Natural killer cell (primary cell): ENCODE measurements at regions of chr2 and their contacts with region 1.

Region 1: DNA sequence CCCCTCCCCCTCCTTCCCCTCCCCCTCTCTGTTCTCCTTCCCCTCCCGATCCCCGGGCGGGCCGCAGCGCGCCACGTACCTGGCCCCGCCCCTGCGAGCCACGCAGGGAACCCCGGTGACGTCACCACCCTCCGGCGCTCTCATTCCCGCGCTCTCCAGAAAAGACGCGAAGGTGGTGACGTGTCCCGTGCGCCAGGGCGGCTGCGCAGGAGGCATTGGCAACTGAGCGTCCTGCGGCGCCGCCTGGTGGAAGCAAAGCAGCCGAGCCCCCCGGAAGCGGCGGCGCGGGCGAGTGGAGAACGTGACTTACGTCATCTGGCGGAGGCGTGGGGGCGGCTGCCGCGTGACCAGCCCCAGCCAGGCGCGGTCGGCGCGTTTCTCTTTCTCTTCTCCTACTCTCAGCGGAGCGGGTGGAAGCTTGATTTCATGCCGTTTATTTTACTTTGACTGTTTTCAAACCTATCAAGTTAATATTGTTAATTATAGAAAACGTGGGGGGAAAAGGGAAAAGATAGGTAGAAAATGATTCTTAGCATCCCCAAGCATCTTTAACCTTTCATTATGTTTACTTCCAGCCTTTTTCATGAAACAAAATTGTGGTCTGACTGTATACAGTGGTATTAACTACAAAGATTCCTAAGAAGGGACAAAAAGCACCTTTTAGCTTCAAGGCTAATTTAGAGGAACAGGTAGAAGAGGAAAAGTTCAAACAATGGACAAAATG is 48.1 kb downstream of the C2orf42 start:
- DNase-seq: peak; percentile 100
- ATAC-seq: peak; percentile 60 to 86 (median 69)
- H3K4me3 ChIP-seq: peak overlapping the region; percentile 65
- H3K4me3 Mint-ChIP-seq: peak overlapping the region; percentile 94
- H3K27ac ChIP-seq: peak overlapping the region; percentile 98
- H3K27ac Mint-ChIP-seq: peak overlapping the region; percentile 98 to 100
- H3K4me1 ChIP-seq: peaks cover 46% of the 10 kb centered on the region
- H3K4me1 Mint-ChIP-seq: peaks cover 40 to 46% of the 10 kb centered on the region in 2 donors
- H3K27me3 ChIP-seq: no peaks in the 10 kb centered on the region
- H3K27me3 Mint-ChIP-seq: no peaks in the 10 kb centered on the region
- CTCF ChIP-seq: peak; percentile 85

Region 2: GRCh38 chr2:69829256-69830046 is 313.3 kb before region 1 on chr2 and contains the start of gene GMCL1:
- intact Hi-C with region 1: loop called (anchors 5 kb)
- DNase-seq: peak; percentile 99 to 100
- ATAC-seq: peak; percentile 92 to 98 (median 92)
- H3K4me3 ChIP-seq: peak within 1 kb of the TSS; percentile 73
- H3K4me3 Mint-ChIP-seq: peak within 1 kb of the TSS; percentile 99
- H3K27ac ChIP-seq: peak within 1 kb of the TSS; percentile 84
- H3K27ac Mint-ChIP-seq: peak within 1 kb of the TSS; percentile 81 to 99
- H3K4me1 ChIP-seq: peaks cover 27% of the 10 kb centered on the region
- H3K4me1 Mint-ChIP-seq: peaks cover 40 to 48% of the 10 kb centered on the region in 2 donors
- H3K27me3 ChIP-seq: no peaks in the 10 kb centered on the region
- H3K27me3 Mint-ChIP-seq: no peaks in the 10 kb centered on the region
- CTCF ChIP-seq: no peak
- total RNA-seq, gene GMCL1: 34.6 to 49.4 (median 35.9) TPM

Region 3: GRCh38 chr2:69946351-69947077 is 196.2 kb before region 1 on chr2:
- intact Hi-C with region 1: loop called (anchors 10 kb)
- DNase-seq: peak; percentile 52 to 75
- ATAC-seq: peak; percentile 87
- H3K4me3 ChIP-seq: no peak overlapping the region
- H3K4me3 Mint-ChIP-seq: peak overlapping the region; percentile 82
- H3K27ac ChIP-seq: peak overlapping the region; percentile 49
- H3K27ac Mint-ChIP-seq: peak overlapping the region; percentile 78 to 91
- H3K4me1 ChIP-seq: peaks cover 36% of the 10 kb centered on the region
- H3K4me1 Mint-ChIP-seq: peaks cover 34 to 42% of the 10 kb centered on the region in 2 donors
- H3K27me3 ChIP-seq: no peaks in the 10 kb centered on the region
- H3K27me3 Mint-ChIP-seq: no peaks in the 10 kb centered on the region
- CTCF ChIP-seq: no peak

Region 4: DNA sequence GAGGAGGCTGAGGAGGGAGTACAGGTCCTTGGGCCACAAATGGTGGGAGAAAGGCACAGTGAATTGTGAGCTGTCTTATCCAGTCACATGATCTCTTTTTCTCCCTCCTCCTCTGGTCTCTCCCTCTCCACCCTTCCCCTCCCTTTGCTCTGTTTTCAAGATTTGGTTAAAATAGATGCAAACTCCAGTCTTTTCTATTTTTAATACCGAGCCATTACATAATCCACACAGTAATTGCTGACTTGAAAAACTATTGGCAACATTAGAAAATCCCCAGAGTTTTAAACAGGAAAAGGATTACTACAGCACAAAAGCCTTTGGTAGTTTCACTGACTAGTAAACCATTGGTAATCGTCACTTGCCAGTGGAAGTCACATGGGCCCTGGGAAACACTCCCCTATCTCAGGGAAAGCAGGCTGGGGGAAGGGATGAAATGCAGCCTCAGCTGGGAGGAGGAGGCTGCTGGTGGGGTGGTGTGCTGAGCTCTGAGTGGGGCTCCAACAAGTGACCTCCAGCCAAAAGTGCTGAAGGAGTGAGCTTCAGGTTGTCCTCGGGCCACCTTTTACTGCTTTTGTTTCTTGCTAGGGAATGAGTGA is 112.8 kb before region 1 on chr2:
- intact Hi-C with region 1: no loop called
- DNase-seq: no peak
- ATAC-seq: no peak
- H3K4me3 ChIP-seq: no peak overlapping the region
- H3K4me3 Mint-ChIP-seq: no peak overlapping the region
- H3K27ac ChIP-seq: peak overlapping the region; percentile 20
- H3K27ac Mint-ChIP-seq: no peak overlapping the region
- H3K4me1 ChIP-seq: peaks cover 17% of the 10 kb centered on the region
- H3K4me1 Mint-ChIP-seq: peaks cover 27 to 31% of the 10 kb centered on the region in 2 donors
- H3K27me3 ChIP-seq: no peaks in the 10 kb centered on the region
- H3K27me3 Mint-ChIP-seq: no peaks in the 10 kb centered on the region
- CTCF ChIP-seq: no peak

Region 5: GRCh38 chr2:70086838-70087701 is 55.7 kb before region 1 on chr2 and contains the start of gene PCBP1:
- intact Hi-C with region 1: loop called (anchors 1 kb)
- DNase-seq: peak; percentile 98
- ATAC-seq: peak; percentile 62 to 85 (median 71)
- H3K4me3 ChIP-seq: peak within 1 kb of the TSS; percentile 94
- H3K4me3 Mint-ChIP-seq: peak within 1 kb of the TSS; percentile 98
- H3K27ac ChIP-seq: peak within 1 kb of the TSS; percentile 98
- H3K27ac Mint-ChIP-seq: peak within 1 kb of the TSS; percentile 99 to 100
- H3K4me1 ChIP-seq: peaks cover 63% of the 10 kb centered on the region
- H3K4me1 Mint-ChIP-seq: peaks cover 79 to 81% of the 10 kb centered on the region in 2 donors
- H3K27me3 ChIP-seq: no peaks in the 10 kb centered on the region
- H3K27me3 Mint-ChIP-seq: no peaks in the 10 kb centered on the region
- CTCF ChIP-seq: no peak
- total RNA-seq, gene PCBP1: 329 to 358 (median 352) TPM

Region 6: GRCh38 chr2:70104231-70105111 is 38.3 kb before region 1 on chr2:
- intact Hi-C with region 1: loop called (anchors 1 kb)
- DNase-seq: peak in 1 of 2 donors; percentile 56
- ATAC-seq: no peak
- H3K4me3 ChIP-seq: peak overlapping the region; percentile 4
- H3K4me3 Mint-ChIP-seq: peak overlapping the region; percentile 86
- H3K27ac ChIP-seq: peak overlapping the region; percentile 84
- H3K27ac Mint-ChIP-seq: peak overlapping the region; percentile 91 to 97
- H3K4me1 ChIP-seq: peaks cover 53% of the 10 kb centered on the region
- H3K4me1 Mint-ChIP-seq: peaks cover 41 to 48% of the 10 kb centered on the region in 2 donors
- H3K27me3 ChIP-seq: no peaks in the 10 kb centered on the region
- H3K27me3 Mint-ChIP-seq: no peaks in the 10 kb centered on the region
- CTCF ChIP-seq: no peak

Region 7: GRCh38 chr2:70132244-70133126 is 10.3 kb before region 1 on chr2:
- intact Hi-C with region 1: loop called (anchors 1 kb)
- DNase-seq: peak in 1 of 2 donors; percentile 76
- ATAC-seq: peak; percentile 39 to 65 (median 46)
- H3K4me3 ChIP-seq: peak overlapping the region; percentile 34
- H3K4me3 Mint-ChIP-seq: peak overlapping the region; percentile 86
- H3K27ac ChIP-seq: peak overlapping the region; percentile 94
- H3K27ac Mint-ChIP-seq: peak overlapping the region; percentile 93 to 98
- H3K4me1 ChIP-seq: peaks cover 76% of the 10 kb centered on the region
- H3K4me1 Mint-ChIP-seq: peaks cover 65 to 73% of the 10 kb centered on the region in 2 donors
- H3K27me3 ChIP-seq: no peaks in the 10 kb centered on the region
- H3K27me3 Mint-ChIP-seq: no peaks in the 10 kb centered on the region
- CTCF ChIP-seq: no peak